Activated T-helper 1 cell treated with anti-CD3 and anti-CD28 coated beads, Interleukin-12 subunit alpha, Interleukin-12 subunit beta, Interleukin-2, Interleukin-4 antibody, amounts not matched to agents 30 ng/mL and 10 ng/mL and 1 ng/mL, durations not matched to agents 14 hours and 24 hours and 36 hours (primary cell): ENCODE measurements at regions of chr5 and their contacts with region 1.

Region 1: GRCh38 chr5:169805527-169805934 is 168.5 kb downstream of the DOCK2 start:
- DNase-seq: peak; percentile 25
- H3K4me3 Mint-ChIP-seq: peak overlapping the region; percentile 51
- H3K27ac Mint-ChIP-seq: peak overlapping the region; percentile 97
- H3K4me1 Mint-ChIP-seq: peaks cover 53% of the 10 kb centered on the region
- H3K27me3 Mint-ChIP-seq: no peaks in the 10 kb centered on the region

Region 2: DNA sequence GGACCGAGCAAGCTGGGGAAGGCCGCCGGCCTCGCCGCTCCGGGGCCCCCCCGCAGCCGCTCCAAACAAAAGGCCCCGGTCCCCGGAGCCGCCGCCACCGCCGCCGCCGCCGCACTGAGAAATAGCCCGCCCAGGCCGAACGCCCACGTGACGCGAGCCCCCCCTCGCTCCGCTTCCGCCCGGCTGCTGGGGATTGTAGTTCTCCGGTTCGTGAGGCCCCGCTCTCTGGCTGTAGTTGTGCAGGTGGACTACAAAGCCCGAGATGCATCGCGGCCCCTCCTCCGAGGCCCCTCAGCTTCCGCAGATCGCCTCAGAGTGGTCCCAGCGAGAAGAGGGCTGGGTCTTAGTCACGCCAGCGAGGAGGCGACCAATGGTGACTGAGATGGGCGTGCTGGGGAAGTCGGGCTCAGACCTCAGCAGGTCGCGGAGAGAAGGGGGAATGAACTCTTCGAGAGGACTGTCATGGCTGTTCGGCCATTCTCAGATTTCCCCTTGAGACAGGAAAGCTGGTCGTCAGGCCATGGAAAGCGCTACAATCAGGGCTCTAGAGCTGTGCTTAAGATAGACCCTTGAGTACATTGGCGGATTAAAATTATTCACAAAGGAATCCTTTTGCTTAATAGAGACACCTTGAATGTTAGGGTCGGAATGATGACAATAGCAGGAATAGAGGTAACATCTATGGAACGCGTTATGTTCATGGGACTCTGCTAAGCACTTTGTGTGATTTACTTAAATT is 1225.9 kb before region 1 on chr5:
- intact Hi-C with region 1: loop called (anchors 1 kb)
- DNase-seq: peak; percentile 95
- H3K4me3 Mint-ChIP-seq: peak overlapping the region; percentile 88
- H3K27ac Mint-ChIP-seq: peak overlapping the region; percentile 96
- H3K4me1 Mint-ChIP-seq: peaks cover 46% of the 10 kb centered on the region
- H3K27me3 Mint-ChIP-seq: peaks cover 3% of the 10 kb centered on the region

Region 3: GRCh38 chr5:169650701-169651331 is 154.7 kb before region 1 on chr5:
- intact Hi-C with region 1: loop called (anchors 2 kb)
- DNase-seq: peak; percentile 37
- H3K4me3 Mint-ChIP-seq: peak overlapping the region; percentile 72
- H3K27ac Mint-ChIP-seq: peak overlapping the region; percentile 99
- H3K4me1 Mint-ChIP-seq: peaks cover 99% of the 10 kb centered on the region
- H3K27me3 Mint-ChIP-seq: no peaks in the 10 kb centered on the region

Region 4: DNA sequence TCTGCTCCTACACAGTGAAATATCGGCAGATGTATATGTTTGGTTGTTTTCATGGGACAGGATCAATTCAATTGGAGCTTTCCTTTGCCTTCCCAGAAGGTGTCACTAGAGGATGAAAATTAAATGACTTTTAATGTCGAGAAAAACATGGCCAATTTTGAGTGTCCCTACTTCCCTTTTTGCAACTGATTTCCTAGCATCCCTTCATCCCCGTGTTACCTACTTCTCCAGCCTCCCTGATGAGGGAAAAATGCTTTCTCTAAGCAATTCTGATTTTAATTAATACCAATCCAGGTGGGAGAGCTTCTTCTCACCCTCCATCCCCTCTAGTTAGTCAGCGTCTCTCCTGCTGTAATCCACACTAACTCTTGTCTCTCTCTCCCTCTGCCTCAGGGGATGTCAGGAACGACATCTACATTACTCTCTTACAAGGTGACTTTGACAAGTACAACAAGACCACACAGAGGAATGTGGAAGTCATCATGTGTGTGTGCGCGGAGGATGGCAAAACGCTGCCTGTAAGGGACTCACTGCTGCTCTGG is 103.5 kb before region 1 on chr5:
- intact Hi-C with region 1: loop called (anchors 5 kb)
- DNase-seq: no peak
- H3K4me3 Mint-ChIP-seq: no peak overlapping the region
- H3K27ac Mint-ChIP-seq: peak overlapping the region; percentile 86
- H3K4me1 Mint-ChIP-seq: peaks cover 36% of the 10 kb centered on the region
- H3K27me3 Mint-ChIP-seq: no peaks in the 10 kb centered on the region

Region 5: DNA sequence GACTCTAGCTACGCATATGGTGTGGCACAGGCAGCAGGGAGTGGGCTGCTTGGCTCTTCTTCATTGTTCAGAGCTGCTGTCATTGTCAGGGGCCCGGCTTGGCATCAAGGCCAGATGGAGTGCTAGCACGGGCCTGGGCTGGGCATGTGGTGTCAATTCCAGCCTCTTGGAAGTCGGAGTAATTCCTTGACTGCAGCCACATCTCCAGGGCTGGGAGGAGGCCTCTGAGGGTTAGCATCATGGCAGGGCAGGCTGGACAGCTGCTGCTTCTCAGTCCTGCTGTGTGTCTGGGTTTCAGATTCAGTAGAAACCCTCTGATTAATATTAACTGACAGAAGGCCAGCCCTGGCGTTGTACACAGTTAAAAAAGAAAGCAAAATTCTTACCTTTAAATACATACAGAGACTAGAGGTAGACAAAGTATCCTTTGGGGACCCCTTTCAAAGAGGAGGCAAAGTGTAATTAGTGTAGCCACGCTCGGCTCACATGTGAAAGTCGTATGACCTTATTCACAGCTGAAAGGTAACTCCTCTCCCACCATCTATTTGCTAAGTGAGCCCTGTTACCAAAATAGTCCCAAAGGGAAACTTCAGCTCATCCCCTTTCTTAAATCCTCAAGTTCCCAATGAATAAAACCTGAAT is 42.0 kb before region 1 on chr5:
- intact Hi-C with region 1: no loop called
- DNase-seq: no peak
- H3K4me3 Mint-ChIP-seq: no peak overlapping the region
- H3K27ac Mint-ChIP-seq: peak overlapping the region; percentile 46
- H3K4me1 Mint-ChIP-seq: no peaks in the 10 kb centered on the region
- H3K27me3 Mint-ChIP-seq: no peaks in the 10 kb centered on the region

Region 6: GRCh38 chr5:169795338-169795737 is 10.2 kb before region 1 on chr5:
- intact Hi-C with region 1: loop called (anchors 1 kb)
- DNase-seq: no peak
- H3K4me3 Mint-ChIP-seq: no peak overlapping the region
- H3K27ac Mint-ChIP-seq: peak overlapping the region; percentile 2
- H3K4me1 Mint-ChIP-seq: peaks cover 42% of the 10 kb centered on the region
- H3K27me3 Mint-ChIP-seq: no peaks in the 10 kb centered on the region

Region 7: GRCh38 chr5:170338933-170339779 is 533.6 kb after region 1 on chr5:
- intact Hi-C with region 1: loop called (anchors 10 kb)
- DNase-seq: peak; percentile 45
- H3K4me3 Mint-ChIP-seq: no peak overlapping the region
- H3K27ac Mint-ChIP-seq: peak overlapping the region; percentile 63
- H3K4me1 Mint-ChIP-seq: peaks cover 20% of the 10 kb centered on the region
- H3K27me3 Mint-ChIP-seq: peaks cover 4% of the 10 kb centered on the region